Activated T-helper 1 cell treated with anti-CD3 and anti-CD28 coated beads, Interleukin-12 subunit alpha, Interleukin-12 subunit beta, Interleukin-2, Interleukin-4 antibody, amounts not matched to agents 30 ng/mL and 10 ng/mL and 1 ng/mL, durations not matched to agents 14 hours and 24 hours and 36 hours (primary cell): ENCODE measurements at regions of chr20 and their contacts with region 1.

Region 1: DNA sequence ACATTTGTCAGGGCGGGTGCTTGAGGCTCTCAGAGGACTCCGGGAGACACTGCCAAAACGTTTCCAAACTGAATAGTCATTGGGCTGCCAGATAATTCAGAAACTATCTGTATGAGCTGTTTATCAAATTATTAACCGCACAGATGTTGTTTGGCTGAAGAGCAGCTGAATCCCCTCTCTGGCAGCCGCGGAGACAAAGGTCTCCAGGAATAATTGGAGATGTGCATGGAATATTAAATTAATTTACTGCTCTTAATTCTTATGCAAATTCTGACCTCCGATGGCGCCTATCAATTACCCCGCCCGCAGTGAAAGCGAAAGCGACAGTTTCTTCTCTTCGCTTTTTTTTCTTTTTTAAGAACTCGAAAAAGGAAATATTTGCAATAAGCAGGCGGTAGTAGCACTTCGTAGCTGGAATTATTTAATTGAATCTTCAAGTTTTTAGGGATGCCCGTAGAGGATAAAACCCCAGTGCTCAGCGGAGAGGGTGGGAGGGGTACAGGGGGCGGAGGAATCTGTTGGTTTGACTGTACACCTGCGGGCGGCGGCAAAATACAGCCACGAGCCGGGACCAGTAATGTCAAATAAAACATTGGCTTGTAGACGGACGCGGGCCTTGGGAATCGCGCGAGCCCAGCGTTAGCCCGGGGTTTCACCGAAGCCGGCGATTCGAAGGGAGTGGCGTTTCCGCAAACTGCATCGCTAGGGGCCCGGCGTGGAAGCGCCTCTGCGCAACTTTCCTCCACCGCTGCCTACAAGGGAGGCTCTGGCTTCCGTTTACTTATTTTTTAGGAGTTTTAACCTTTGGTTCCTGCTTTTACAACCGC is 6.2 kb downstream of the LINC00237 start:
- DNase-seq: peak; percentile 39
- H3K4me3 Mint-ChIP-seq: peak overlapping the region; percentile 83
- H3K27ac Mint-ChIP-seq: peak overlapping the region; percentile 93
- H3K4me1 Mint-ChIP-seq: peaks cover 49% of the 10 kb centered on the region
- H3K27me3 Mint-ChIP-seq: peaks cover 70% of the 10 kb centered on the region

Region 2: DNA sequence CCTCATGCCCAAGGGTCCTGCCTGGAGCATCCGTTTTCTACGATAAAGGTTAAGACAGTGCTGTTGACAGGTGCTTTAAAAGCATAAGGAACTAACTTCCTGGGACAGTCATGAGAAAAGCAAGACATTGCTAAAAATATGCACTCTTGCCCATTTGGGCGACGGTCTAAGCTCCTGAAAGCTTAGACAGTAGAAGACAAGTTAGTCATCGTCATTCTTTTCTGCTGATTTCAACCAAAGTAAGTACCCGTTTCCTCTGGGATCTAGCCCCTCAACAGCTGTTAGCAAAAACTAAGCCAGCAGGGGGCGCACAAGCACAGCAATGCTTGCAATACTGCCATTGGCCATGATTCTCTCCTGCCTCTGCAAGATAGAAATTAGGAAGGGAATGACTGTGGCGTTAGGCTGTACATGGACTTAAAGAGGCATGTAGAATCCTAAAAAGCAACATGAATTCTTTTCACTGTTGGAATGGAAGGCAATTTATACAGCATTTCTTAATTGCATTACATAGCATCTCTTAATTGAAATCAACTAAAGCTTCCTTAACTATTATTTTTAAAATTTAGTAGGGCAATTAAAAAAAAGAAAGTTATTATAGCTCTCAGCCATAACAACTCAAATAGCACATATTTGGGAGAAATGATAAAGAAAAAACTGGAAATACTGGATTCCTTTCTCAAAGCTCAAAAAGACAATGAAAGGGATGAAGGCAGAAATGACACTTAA is 239.7 kb before region 1 on chr20:
- intact Hi-C with region 1: loop called (anchors 5 kb)
- DNase-seq: peak; percentile 64
- H3K4me3 Mint-ChIP-seq: no peak overlapping the region
- H3K27ac Mint-ChIP-seq: no peak overlapping the region
- H3K4me1 Mint-ChIP-seq: no peaks in the 10 kb centered on the region
- H3K27me3 Mint-ChIP-seq: peaks cover 4% of the 10 kb centered on the region

Region 3: DNA sequence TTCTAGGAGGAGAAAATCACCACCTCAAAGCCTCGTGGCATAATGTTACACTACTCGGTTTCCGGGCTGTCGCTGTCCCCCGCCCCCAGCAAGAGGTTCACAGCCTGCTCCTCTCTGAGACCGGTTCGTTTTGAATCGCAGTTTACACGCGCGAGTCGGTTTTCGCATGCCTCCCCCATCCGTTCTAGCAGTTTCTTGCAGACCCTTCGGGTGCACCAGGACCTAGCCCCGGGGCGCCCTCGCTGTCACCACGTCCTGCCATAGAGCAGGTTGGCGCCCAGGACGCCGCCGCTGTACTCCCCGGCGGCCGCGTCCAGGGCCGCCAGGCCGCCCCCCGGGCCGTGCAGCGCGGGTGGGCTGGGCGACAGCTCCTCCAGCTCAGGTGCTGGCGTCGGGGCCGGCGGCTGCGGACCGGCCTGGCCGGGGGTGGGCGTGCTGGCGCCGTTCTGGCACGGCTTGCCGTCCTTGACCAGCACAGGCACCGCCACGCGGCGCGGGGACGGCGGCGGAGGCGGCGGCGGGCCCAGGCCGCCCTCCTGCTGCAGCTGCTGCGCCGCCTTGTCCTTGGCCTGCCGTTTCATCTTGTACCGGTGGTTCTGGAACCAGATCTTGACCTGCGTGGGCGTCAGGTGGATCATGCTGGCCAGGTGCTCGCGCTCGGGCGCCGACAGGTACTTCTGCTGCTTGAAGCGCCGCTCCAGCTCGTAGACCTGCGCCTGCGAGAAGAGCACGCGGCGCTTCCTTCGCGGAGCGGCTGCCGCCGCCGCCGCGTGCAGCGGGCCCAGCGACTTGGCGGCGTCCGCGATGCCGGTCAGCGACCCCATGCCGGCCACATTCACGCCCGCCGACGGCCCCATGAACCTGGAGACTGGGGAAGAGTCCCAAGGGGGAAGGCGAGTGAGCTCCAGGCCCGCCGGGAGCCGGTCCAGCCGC is 296.0 kb after region 1 on chr20:
- intact Hi-C with region 1: loop called (anchors 1 kb)
- DNase-seq: peak; percentile 43
- H3K4me3 Mint-ChIP-seq: peak overlapping the region; percentile 77
- H3K27ac Mint-ChIP-seq: peak overlapping the region; percentile 73
- H3K4me1 Mint-ChIP-seq: peaks cover 38% of the 10 kb centered on the region
- H3K27me3 Mint-ChIP-seq: peaks cover 77% of the 10 kb centered on the region

Region 4: DNA sequence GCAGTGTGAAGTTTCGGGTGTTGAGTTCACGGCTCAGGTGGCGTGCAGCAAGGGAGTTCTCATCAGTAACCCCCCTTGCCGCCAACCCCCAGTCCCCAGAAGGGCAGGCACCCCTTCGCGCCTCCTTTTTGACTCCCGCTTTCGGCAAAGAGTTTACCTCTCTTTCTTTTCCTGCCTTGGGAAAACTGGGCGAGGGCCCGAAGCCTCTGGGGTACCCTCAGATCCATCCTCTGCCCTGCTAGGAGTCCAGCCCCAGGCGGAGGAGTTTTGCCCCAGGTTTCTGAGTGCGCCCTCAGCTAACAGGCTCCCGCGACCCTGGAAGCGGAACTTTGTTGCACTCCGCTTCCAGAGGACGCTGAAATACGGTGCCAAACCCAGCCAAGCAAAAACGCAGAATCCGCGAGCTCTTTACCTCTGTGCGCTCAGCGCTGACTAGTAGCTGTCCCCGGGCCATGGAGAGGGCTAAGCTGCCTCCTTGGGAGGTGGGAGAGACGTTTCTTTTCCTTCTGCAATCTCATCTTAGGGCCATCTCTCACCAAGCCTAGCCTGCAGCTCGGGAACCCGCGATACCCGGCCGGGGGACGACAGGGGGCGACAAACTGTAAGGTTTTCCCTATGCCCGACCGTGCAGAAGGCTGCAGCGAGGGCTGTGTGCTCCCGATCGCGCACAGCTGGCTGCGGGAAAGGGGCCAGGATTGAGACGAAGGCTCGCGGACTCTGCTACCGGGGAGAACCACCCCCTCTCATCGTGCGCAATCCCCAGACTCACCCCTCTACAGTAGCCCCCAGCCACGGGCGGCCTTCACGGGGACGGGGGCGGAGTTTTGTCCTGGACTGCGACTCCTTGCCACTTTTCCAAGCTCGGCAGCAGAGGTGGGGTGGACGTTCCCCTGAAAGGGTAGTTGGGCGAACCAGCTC is 602.8 kb after region 1 on chr20:
- intact Hi-C with region 1: loop called (anchors 2 kb)
- DNase-seq: no peak
- H3K4me3 Mint-ChIP-seq: no peak overlapping the region
- H3K27ac Mint-ChIP-seq: no peak overlapping the region
- H3K4me1 Mint-ChIP-seq: peaks cover 8% of the 10 kb centered on the region
- H3K27me3 Mint-ChIP-seq: peaks cover 81% of the 10 kb centered on the region